Activated T-helper 2 cell treated with anti-CD3 and anti-CD28 coated beads, Interferon-gamma antibody, Interleukin-2, Interleukin-4, amounts not matched to agents 10 μg/mL and 5 μg/mL and 100 μg/mL, durations not matched to agents 14 hours and 24 hours and 36 hours (primary cell): ENCODE measurements at regions of chr9 and their contacts with region 1.

Region 1: DNA sequence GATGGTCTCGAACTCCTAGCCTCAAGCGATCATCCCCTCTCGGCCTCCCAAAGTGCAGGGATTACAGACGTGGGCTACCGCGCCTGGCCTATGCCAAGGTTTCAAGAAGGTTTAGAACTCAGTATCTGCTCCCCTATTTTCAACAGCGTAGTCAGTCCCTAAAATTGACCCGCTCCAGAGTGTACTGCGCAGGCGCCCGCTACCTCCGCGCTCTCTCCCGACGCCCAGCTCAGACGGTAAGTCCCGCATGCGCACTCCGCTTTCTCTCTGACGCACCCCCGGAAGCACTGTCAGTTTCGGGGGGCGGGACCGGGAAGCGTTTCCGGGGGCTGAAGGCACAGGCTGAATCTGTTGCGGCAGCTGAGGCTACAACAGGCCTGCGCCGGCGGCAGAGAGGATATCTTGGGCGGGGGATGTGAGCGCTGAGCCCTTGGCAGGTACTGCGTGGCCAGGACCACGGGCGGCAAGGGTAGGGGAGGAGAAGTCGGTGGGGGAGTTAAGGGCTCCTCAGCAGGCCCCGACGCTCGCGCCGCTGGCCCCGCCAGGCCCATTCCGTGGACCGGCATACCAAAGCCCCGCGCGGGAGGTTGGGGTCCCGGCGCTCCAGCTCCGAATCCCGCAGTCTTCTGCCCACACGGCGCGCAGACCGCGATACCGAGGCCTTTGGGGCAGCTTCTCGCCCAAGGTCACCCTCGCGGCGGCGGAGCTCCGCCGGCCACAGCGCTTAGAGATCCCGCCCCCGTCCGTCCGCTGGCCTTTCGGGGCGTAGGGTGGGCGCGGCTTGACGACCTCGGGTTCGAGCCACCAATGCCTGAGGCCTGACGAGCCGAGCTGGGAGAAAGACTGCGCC is at the start of gene ZBTB43:
- DNase-seq: peak; percentile 98
- H3K4me3 Mint-ChIP-seq: peak within 1 kb of the TSS; percentile 90
- H3K27ac Mint-ChIP-seq: peak within 1 kb of the TSS; percentile 94
- H3K4me1 Mint-ChIP-seq: peaks cover 28% of the 10 kb centered on the region
- H3K27me3 Mint-ChIP-seq: no peaks in the 10 kb centered on the region
- total RNA-seq, gene ZBTB43: 16.4 and 22.3 TPM in 2 replicates

Region 2: DNA sequence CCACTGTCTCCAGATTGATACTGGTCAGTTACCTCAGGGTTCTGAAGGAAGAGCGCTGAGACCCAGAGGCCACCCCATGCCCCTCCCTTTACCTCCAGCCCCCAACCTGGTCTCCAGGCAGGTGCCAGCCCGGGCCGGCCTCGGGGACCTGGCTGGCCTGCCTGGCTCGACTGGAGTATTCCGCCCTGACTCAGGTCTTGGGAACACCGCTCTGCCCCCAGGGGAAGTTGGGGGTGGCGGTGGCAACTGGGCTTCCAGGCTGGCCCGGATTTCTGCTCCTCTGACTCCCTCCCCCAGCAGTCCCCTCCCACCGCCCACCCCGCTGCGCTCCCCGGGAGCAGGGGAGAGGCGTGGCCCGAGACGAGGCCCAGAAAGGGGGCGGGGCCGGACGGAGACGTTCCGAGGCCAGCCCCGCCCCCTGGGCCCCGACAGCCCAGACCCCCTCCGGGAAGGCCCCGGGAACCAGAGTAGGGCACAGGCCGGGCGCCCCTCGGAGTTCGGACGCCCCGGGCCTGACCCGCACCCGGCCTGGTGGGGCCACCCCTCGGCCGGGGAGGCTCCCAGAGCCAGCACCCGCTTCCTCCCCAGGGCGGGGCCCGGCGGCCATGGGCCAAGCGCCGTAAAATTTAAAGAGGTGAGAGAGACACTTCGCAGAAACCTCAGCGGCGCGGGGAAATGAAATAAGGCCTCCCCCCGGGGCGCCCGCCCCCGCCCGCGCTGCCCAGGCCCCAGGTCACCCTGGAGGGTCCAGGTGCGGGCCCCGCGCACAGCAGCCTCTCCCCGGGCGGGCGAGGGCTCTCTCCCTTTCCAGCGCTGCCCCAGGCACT is 82.5 kb before region 1 on chr9:
- intact Hi-C with region 1: loop called (anchors 2 kb)
- DNase-seq: peak; percentile 80
- H3K4me3 Mint-ChIP-seq: peak overlapping the region; percentile 85
- H3K27ac Mint-ChIP-seq: peak overlapping the region; percentile 68
- H3K4me1 Mint-ChIP-seq: peaks cover 35% of the 10 kb centered on the region
- H3K27me3 Mint-ChIP-seq: peaks cover 16% of the 10 kb centered on the region

Region 3: GRCh38 chr9:126745574-126746411 is 59.1 kb before region 1 on chr9:
- intact Hi-C with region 1: no loop called
- DNase-seq: peak; percentile 7
- H3K4me3 Mint-ChIP-seq: peak overlapping the region; percentile 6
- H3K27ac Mint-ChIP-seq: peak overlapping the region; percentile 24
- H3K4me1 Mint-ChIP-seq: peaks cover 33% of the 10 kb centered on the region
- H3K27me3 Mint-ChIP-seq: peaks cover 7% of the 10 kb centered on the region

Region 4: DNA sequence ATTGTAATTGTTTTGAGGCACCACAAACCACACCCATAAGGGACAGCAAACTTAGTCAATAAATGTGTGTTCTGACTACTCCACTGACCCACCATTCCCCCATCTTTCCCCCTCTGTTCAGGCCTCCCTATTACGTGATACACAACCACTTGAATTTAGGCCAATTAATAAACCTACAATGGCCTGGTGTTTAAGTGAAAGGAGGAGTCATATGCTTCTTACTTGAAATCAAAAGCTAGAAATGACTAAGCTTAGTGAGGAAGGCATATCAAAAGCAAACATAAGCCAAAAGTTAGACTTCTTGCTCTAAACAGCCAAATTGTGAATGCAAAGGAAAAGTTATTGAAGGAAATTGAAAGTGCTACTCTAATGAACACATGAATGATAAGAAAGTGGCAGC is 14.6 kb after region 1 on chr9:
- intact Hi-C with region 1: no loop called
- DNase-seq: no peak
- H3K4me3 Mint-ChIP-seq: no peak overlapping the region
- H3K27ac Mint-ChIP-seq: peak overlapping the region; percentile 29
- H3K4me1 Mint-ChIP-seq: peaks cover 13% of the 10 kb centered on the region
- H3K27me3 Mint-ChIP-seq: no peaks in the 10 kb centered on the region

Region 5: DNA sequence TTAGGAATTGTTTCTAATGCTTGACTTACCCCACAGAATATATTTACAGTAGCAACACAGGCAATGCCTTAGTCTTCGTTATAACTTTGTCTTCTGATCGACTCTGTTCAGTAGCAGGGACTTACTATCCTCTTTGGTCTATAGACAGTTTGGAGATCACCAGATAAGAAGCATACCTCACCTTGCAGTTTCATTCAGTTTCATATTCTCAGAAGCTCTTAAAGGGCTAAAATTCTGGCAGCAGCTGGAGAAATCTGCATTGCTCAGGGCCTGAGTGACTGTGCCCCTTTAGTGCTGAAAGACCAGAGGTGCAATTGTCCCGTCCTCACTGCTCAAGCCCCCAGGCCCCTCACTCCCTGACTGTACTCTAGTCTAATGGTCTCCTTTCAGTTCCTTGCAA is 25.9 kb after region 1 on chr9:
- intact Hi-C with region 1: loop called (anchors 2 kb)
- DNase-seq: no peak
- H3K4me3 Mint-ChIP-seq: no peak overlapping the region
- H3K27ac Mint-ChIP-seq: no peak overlapping the region
- H3K4me1 Mint-ChIP-seq: peaks cover 39% of the 10 kb centered on the region
- H3K27me3 Mint-ChIP-seq: no peaks in the 10 kb centered on the region

Region 6: DNA sequence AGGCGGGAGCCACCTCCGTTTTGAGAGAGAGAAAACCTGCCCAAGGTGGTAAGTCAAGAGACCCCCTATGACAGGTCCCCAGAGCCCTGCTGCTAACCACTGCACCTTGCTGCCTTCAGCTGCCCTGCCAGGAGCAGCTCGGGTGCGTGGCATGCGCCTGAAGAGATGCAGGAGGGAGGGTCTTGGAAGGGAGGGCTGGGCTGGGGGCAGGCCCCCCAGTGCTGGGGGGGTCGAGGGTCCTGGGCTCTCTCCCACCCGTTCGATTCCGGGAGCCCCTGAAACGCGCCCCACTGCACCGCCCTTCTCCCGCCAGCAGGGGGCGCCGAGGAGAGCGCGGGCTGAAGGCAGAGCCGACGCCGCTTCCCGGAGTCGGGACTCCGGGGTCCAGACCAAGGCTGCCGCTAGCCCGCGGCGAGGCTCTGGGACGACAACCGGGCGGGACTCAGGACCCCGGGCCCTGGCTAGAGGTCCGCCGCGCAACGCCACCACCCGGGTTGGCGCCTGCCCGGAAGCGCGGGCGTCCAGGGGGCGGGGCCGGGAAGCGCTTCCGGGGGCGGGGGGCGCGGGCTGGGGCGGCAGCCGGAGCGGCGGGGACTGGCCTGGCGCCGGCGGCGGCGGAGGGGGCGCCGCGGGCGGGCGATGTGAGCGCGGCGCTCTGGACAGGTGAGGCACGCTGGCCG is 55.3 kb after region 1 on chr9 and contains the start of gene ZBTB34:
- intact Hi-C with region 1: loop called (anchors 2 kb)
- DNase-seq: peak; percentile 71
- H3K4me3 Mint-ChIP-seq: peak within 1 kb of the TSS; percentile 84
- H3K27ac Mint-ChIP-seq: peak within 1 kb of the TSS; percentile 76
- H3K4me1 Mint-ChIP-seq: peaks cover 18% of the 10 kb centered on the region
- H3K27me3 Mint-ChIP-seq: peaks cover 26% of the 10 kb centered on the region
- total RNA-seq, gene ZBTB34: 6.7 and 7.2 TPM in 2 replicates